GM12878 (cell line): ENCODE measurements at regions of chr5 and their contacts with region 1.

Region 1: DNA sequence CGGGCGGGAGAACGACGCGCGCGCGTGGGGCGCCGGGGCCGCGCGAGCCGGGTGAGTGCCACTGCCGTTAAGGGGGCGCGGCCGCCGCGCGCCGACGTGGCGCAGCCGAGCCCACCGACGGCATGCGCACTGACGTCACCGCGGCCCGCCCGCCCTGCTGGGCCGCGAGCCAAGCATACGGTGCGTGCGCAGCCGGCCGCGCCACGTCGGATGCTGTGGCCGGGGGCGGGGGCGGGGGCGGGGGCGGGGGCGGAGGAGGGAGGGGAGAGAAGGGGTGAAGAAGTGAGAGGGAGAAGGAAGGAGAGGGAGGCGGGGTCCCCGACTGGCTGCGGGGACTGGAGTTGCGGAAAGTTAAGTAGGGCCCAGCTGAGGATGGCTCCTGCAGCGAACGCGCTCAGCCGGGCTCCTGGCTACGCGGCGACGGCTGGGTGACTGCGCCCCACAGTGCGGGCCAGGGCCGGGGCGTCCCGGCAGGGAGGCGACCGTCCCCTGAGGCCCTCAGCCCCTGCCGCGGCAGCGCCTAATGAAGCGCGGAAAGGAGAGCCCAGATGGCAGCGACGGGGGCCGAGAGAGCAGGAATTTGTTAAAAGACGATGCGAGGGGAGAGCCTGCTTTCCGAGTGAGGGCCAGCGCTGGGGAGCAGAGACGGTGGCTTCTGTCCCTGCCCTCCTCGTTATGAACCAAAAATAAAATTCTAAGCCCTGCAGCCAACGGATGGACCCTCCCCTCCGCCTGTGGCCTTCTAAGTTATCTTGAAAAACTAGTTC is at the start of gene DAP:
- DNase-seq: peak; percentile 63
- ATAC-seq: peak; percentile 71
- H3K4me3 ChIP-seq: peak within 1 kb of the TSS; percentile 91
- H3K27ac ChIP-seq: peak within 1 kb of the TSS; percentile 82
- H3K4me1 ChIP-seq: peaks cover 13% of the 10 kb centered on the region
- H3K27me3 ChIP-seq: no peaks in the 10 kb centered on the region
- CTCF ChIP-seq: no peak
- EP300 ChIP-seq: no peak
- POLR2A ChIP-seq: peak; percentile 87
- RAD21 ChIP-seq: no peak
- polyA plus RNA-seq, gene DAP: 12.9 to 18.1 TPM

Region 2: DNA sequence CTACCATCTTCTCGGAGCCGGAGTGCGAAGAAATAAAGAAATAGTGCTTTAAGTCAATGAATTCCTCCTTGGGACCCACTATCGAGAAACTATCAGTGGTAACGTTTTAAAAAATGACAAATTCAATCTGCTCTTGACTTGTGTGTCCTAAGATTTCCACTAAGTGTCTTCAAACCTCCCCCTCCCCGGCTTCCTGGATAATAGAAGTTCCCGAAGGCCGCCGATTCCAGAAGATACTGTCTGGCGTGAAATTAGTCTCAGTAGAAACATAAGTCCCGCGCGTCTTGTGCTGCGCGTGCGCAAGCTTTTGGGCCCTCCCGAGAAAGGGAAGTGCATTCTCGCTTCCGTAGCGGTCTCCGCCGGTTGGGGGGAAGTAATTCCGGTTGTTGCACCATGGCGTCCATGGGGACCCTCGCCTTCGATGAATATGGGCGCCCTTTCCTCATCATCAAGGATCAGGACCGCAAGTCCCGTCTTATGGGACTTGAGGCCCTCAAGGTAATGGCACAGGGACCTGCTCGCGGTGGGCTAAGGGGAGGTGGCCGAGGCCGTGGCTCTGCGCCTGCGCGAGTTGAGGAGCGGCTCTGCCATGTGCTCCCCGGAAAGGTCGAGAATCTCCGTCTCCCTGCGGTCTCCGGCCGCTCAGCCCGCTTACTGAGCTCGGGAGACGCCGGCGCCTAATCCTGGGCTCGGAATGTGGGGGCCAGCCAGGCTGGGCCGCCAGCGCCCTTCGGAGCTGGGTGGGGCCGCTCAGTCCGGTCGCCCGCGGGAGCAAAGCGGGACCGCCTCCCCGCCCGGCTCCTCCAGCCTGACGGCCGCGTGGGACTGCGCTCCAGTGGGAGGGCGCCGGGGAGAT is 511.2 kb before region 1 on chr5 and contains the start of gene CCT5:
- CTCF ChIA-PET with region 1: no interaction called
- POLR2A ChIA-PET with region 1: no interaction called
- RAD21 ChIA-PET with region 1: no interaction called
- SMC1A ChIA-PET with region 1: no interaction called
- in situ Hi-C with region 1: no loop called
- intact Hi-C with region 1: loop called (anchors 5 kb)
- DNase-seq: peak; percentile 90
- ATAC-seq: peak; percentile 77
- H3K4me3 ChIP-seq: peak within 1 kb of the TSS; percentile 99
- H3K27ac ChIP-seq: peak within 1 kb of the TSS; percentile 97
- H3K4me1 ChIP-seq: peaks cover 7% of the 10 kb centered on the region; the same call in 1 of the 2 replicates
- H3K27me3 ChIP-seq: no peaks in the 10 kb centered on the region
- CTCF ChIP-seq: no peak
- EP300 ChIP-seq: no peak
- POLR2A ChIP-seq: peak; percentile 89
- RAD21 ChIP-seq: no peak
- polyA plus RNA-seq, gene CCT5: 435 to 606 TPM

Region 3: DNA sequence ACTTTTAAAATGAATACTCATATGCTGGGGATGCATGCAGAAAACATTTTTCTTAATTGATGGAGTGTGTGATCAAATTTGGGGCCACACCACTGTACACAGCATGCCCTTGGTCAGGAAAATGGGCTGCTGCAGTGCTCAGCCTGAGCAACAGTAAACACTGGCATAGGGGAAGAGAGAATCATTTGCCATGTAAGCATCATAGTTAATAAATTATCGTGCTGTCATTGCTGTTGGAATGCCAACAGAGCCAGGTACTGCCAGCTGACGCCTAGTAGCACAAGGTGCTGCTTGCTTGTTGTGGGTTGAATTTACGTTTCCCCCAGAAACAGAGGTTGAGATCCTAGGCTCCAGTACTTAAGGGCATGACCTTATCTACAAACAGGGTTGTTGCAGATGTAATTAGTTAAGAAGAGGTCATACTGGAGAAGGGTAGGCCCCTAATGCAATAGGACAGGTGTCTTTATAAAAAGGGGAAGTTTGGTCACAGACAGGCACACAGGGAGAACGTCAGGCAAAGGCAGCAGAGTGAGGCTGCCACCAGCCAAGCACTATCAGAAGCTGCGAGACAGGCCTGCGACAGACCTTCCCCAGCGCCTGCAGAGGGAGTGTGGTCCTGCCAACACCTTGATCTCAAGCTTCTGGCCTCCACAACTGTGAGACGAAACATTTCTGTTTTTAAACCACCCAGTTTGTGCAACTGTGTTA is 25.6 kb before region 1 on chr5:
- CTCF ChIA-PET with region 1: no interaction called
- POLR2A ChIA-PET with region 1: interaction called, 5 read pairs
- RAD21 ChIA-PET with region 1: interaction called, 5 read pairs
- SMC1A ChIA-PET with region 1: interaction called, 10 read pairs
- in situ Hi-C with region 1: no loop called
- intact Hi-C with region 1: loop called (anchors 2 kb)
- DNase-seq: no peak
- ATAC-seq: peak; percentile 73
- H3K4me3 ChIP-seq: no peak overlapping the region
- H3K27ac ChIP-seq: no peak overlapping the region
- H3K4me1 ChIP-seq: peaks cover 12% of the 10 kb centered on the region
- H3K27me3 ChIP-seq: no peaks in the 10 kb centered on the region
- CTCF ChIP-seq: peak; percentile 6 to 14 (median 13); a peak in 1 of 6 replicates
- EP300 ChIP-seq: no peak
- POLR2A ChIP-seq: peak; percentile 22; the same call in 1 of the 2 replicates
- RAD21 ChIP-seq: 0 out of 2 replicates have a peak, but pooled peaks have one; percentile 5

Region 4: DNA sequence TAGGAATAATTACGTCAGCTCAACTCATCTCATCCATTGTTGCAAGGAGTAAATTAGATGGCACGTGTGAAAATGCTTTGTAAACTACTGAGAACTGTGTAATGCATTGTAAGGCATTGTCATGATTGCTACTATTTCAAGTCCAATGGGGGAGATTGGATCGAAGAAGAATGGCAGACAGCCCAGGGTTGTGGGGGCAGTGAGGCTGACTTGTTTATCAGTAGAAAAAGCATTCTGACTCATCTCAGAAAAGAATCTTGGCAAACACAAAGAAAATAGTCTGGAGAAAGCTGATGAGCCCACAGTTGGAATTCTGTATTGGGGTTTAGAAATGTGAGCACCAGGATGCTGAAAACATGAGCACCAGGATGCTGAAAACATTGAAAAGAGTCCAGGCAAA is 27.7 kb after region 1 on chr5:
- CTCF ChIA-PET with region 1: no interaction called
- POLR2A ChIA-PET with region 1: no interaction called
- RAD21 ChIA-PET with region 1: no interaction called
- SMC1A ChIA-PET with region 1: no interaction called
- in situ Hi-C with region 1: no loop called
- intact Hi-C with region 1: no loop called
- DNase-seq: no peak
- ATAC-seq: no peak
- H3K4me3 ChIP-seq: no peak overlapping the region
- H3K27ac ChIP-seq: no peak overlapping the region
- H3K4me1 ChIP-seq: no peaks in the 10 kb centered on the region
- H3K27me3 ChIP-seq: no peaks in the 10 kb centered on the region
- CTCF ChIP-seq: no peak
- EP300 ChIP-seq: no peak
- POLR2A ChIP-seq: no peak
- RAD21 ChIP-seq: no peak